Right cardiac atrium (tissue), 5 donors: ENCODE measurements at regions of chr3 and their contacts with region 1.

Region 1: GRCh38 chr3:69439643-69440270 is 53.9 kb upstream of the FRMD4B start:
- DNase-seq: no peak
- ATAC-seq: peak in 1 of 2 donors; percentile 33
- H3K4me3 ChIP-seq: no peak overlapping the region
- H3K27ac ChIP-seq: no peak overlapping the region
- H3K4me1 ChIP-seq: no peaks in the 10 kb centered on the region
- H3K27me3 ChIP-seq: no peaks in the 10 kb centered on the region

Region 2: DNA sequence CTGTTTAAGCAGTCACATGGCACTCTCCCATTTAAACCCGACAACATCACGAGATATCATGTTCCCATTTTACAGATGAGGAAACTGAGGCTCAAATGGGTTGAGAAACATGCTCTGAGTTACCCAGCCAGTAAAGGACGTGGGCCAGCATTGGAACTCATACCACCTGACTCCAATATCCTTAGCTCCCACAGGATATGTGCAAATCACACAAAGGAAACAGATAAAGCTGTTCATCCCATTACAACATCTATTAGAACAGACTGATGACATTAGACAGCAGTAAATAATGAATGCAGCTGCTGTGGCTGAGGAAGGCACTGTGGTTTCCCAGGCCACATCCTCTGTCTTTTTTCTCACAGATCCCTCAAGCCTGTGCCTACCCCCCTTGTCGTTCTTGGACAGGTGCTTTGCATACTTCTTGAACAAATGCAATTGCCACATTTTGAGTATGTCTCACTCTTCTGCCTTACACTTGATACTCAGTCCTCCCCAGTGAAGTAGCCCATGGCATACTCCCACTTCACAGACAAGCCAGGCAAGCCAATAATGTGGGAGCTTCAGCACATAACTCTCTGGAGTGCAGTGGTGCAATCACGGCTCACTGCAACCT is 71.5 kb before region 1 on chr3:
- intact Hi-C with region 1: no loop called
- DNase-seq: peak in 1 of 3 donors; percentile 45
- ATAC-seq: no peak
- H3K4me3 ChIP-seq: no peak overlapping the region
- H3K27ac ChIP-seq: no peak overlapping the region
- H3K4me1 ChIP-seq: peaks cover 16% of the 10 kb centered on the region
- H3K27me3 ChIP-seq: no peaks in the 10 kb centered on the region

Region 3: GRCh38 chr3:69542221-69543079 is 102.7 kb after region 1 on chr3:
- intact Hi-C with region 1: loop called in 1 of 4 experiments (anchors 10 kb)
- DNase-seq: peak; percentile 51 to 80 (median 78)
- ATAC-seq: peak; percentile 70 to 79
- H3K4me3 ChIP-seq: peak overlapping the region; percentile 82
- H3K27ac ChIP-seq: peak overlapping the region; percentile 5
- H3K4me1 ChIP-seq: no peaks in the 10 kb centered on the region
- H3K27me3 ChIP-seq: no peaks in the 10 kb centered on the region

Region 4: DNA sequence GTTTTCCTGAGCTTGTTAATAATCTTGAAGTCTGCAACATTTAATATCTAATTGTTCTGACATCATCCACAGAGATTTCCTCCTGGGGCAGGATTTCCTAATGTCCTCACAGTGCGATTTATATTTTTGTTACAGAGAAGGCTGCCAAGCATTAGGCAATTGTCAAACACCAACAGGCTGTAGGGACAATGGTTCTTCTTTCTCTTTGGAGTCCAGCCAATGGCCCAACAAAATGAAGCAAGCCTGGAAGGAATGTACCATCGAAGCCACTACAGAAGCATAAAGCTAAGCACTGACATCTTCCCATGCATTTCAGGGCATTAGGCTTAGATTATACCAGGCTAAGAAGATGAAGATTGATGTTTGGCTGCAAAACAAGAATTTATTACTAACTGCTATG is 119.2 kb after region 1 on chr3:
- intact Hi-C with region 1: loop called in 1 of 4 experiments (anchors 10 kb)
- DNase-seq: peak in 1 of 3 donors; percentile 45
- ATAC-seq: peak; percentile 89 to 93
- H3K4me3 ChIP-seq: no peak overlapping the region
- H3K27ac ChIP-seq: no peak overlapping the region
- H3K4me1 ChIP-seq: no peaks in the 10 kb centered on the region
- H3K27me3 ChIP-seq: no peaks in the 10 kb centered on the region

Region 5: DNA sequence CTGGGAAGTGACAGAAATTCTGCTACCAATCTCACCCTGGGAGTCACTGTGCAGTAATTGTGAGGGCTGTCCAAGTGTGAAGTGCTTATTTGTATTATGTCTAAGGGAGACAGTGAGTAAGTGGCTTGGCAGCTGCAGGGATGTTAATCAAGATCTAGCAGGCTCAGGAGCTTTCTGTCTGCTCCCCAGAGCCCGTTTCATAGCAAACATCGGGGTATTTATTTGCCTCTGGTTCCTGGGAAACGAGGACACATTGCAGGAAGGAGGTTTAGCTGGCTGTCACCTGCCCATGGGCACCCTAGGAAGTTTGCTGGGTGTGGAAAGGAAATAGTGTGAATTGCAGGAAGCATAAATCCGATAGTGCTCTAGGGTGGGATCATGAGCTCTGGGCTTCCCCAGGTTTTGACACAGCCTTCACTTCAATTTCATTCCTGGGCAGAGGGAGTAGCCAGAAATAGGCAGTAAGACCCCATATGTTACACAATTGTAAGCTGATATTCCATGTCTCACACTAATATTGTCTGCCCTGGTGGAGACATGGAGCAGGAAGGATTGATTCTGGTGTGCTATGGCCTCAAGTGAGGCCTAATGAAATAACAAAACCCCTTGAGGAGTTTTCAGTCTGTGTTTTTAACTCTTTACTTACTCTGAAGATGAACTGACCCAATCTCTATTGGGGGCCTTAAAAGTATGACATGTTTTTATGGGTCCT is 225.4 kb after region 1 on chr3:
- intact Hi-C with region 1: loop called (anchors 5 to 10 kb)
- DNase-seq: peak; percentile 35 to 60 (median 56)
- ATAC-seq: peak; percentile 91 to 96
- H3K4me3 ChIP-seq: no peak overlapping the region
- H3K27ac ChIP-seq: peak overlapping the region; percentile 25
- H3K4me1 ChIP-seq: no peaks in the 10 kb centered on the region
- H3K27me3 ChIP-seq: no peaks in the 10 kb centered on the region

Region 6: DNA sequence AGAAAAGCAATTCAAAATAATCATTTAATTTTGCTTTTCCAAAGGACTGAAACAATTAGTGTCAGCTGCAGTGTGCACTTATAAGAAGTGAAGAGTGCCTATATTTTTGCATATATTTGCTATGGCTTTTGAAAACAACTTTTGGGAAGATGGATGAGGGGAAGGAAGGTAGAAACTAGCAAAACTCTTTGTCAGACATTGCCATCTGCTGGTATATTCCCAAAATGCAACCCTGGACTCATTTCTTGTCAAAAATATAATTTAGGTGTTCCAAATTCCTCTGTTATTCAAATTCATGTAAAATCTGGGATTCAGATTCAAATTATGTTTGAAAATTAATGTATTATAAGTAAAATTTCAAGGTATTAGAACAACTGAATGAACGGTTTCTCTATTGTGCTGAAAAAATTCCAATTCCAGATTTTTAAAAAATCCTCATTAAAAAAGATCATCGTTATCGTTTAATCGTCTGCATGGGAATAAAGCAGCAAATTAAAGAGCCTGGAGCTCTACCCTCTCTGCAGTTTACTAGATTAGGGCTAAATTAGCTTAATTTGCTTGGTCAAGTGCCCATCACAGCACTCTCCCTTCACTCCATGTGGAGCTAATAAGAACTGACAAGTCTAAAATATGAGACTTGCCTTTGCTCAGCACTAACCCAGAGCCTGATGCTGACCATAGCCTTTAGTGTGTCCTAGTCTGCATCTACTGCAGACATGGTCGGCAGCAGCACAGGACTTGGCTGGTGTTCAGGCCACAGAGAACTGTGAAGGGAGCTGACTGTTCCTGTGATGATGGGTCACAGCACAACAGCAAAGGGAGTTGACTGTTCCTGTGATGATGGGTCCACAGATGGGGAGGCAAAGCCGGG is 231.6 kb after region 1 on chr3:
- intact Hi-C with region 1: loop called (anchors 5 to 10 kb)
- DNase-seq: peak in 2 of 3 donors; percentile 38 to 55
- ATAC-seq: peak; percentile 53 to 67
- H3K4me3 ChIP-seq: no peak overlapping the region
- H3K27ac ChIP-seq: no peak overlapping the region
- H3K4me1 ChIP-seq: peaks cover 2% of the 10 kb centered on the region
- H3K27me3 ChIP-seq: no peaks in the 10 kb centered on the region